Activated naive CD4-positive, alpha-beta T cell treated with anti-CD3 and anti-CD28 coated beads, Interleukin-2, amount 10 ng/mL, durations not matched to agents 7 days and 5 days (primary cell): ENCODE measurements at regions of chr10 and their contacts with region 1.

Region 1: GRCh38 chr10:74213571-74214162 is 62.6 kb downstream of the ADK start:
- DNase-seq: peak; percentile 65
- H3K4me3 Mint-ChIP-seq: no peak overlapping the region
- H3K27ac Mint-ChIP-seq: no peak overlapping the region
- H3K4me1 Mint-ChIP-seq: peaks cover 3% of the 10 kb centered on the region
- H3K27me3 Mint-ChIP-seq: no peaks in the 10 kb centered on the region

Region 2: DNA sequence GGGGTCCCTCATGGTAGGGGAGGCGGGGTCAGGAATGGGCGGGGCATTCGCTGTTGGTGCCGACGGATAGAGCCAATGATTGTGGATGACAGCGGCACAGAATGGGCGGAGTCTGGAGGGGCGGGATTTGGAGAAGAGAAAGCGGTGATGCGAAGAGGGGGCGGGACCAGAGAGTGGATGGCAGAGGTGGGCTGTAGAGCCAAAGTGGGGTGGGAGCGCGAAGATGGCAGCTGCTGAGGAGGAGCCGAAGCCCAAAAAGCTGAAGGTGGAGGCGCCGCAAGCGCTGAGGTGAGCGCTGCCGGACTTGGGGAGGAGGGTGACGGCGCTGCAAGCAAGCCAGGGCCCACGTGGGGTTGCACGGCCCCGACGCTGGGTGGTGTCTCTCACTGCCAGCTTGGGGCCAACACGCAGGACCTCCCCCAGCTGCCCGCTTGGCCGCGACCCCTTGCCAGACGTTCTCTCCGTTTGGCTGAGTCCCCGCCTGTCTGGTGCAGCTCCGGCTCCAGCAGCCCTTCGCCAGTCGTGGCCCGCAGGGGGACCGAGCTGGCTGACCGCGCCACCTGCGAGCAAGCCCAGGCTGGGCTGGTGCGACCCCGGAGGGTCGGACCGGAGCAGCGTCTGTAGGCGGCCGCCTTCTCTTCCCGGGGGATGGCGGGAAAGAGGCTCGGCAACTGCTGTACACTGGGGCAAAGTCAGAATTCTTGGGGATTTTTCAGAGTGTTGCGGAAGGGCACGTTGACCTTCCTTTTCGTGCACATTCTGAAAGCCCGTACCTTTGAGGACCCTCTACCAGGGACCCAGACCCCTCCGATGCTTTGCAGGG is 62.4 kb before region 1 on chr10 and contains the start of gene ADK:
- CTCF ChIA-PET with region 1: interaction called, 11 read pairs
- DNase-seq: peak; percentile 100
- H3K4me3 Mint-ChIP-seq: no peak within 1 kb of the TSS
- H3K27ac Mint-ChIP-seq: no peak within 1 kb of the TSS
- H3K4me1 Mint-ChIP-seq: peaks cover 31% of the 10 kb centered on the region
- H3K27me3 Mint-ChIP-seq: no peaks in the 10 kb centered on the region

Region 3: DNA sequence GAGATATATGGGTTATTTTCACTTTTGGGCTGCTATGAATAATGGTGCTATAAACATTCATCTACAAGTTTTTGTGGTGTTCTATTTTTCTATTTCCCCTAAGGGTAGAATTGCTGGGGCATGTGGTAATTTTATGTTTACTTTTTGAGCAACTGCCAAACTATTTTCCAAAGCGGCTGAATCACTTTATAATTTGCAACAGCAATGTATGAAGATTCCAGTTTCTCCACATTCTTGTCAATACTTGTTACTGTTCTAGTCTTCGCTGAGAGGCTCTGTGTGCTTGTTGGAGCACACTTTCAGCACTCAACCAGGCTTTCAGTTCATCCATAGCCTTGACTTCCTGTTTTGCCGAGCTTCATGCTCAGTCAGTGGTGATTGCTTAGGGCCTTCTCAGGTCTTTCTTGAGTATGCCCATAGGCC is 23.7 kb before region 1 on chr10:
- CTCF ChIA-PET with region 1: interaction called, 11 read pairs
- DNase-seq: peak; percentile 41
- H3K4me3 Mint-ChIP-seq: peak overlapping the region; percentile 46
- H3K27ac Mint-ChIP-seq: peak overlapping the region; percentile 94
- H3K4me1 Mint-ChIP-seq: peaks cover 44% of the 10 kb centered on the region
- H3K27me3 Mint-ChIP-seq: no peaks in the 10 kb centered on the region

Region 4: GRCh38 chr10:74244097-74244685 is 30.5 kb after region 1 on chr10:
- CTCF ChIA-PET with region 1: no interaction called
- DNase-seq: peak; percentile 49
- H3K4me3 Mint-ChIP-seq: no peak overlapping the region
- H3K27ac Mint-ChIP-seq: no peak overlapping the region
- H3K4me1 Mint-ChIP-seq: no peaks in the 10 kb centered on the region
- H3K27me3 Mint-ChIP-seq: no peaks in the 10 kb centered on the region

Region 5: GRCh38 chr10:74275755-74276290 is 62.2 kb after region 1 on chr10:
- CTCF ChIA-PET with region 1: no interaction called
- DNase-seq: no peak
- H3K4me3 Mint-ChIP-seq: no peak overlapping the region
- H3K27ac Mint-ChIP-seq: no peak overlapping the region
- H3K4me1 Mint-ChIP-seq: no peaks in the 10 kb centered on the region
- H3K27me3 Mint-ChIP-seq: no peaks in the 10 kb centered on the region